ENCODE measurements at regions of chr12 and their contacts with region 1.

Region 1: DNA sequence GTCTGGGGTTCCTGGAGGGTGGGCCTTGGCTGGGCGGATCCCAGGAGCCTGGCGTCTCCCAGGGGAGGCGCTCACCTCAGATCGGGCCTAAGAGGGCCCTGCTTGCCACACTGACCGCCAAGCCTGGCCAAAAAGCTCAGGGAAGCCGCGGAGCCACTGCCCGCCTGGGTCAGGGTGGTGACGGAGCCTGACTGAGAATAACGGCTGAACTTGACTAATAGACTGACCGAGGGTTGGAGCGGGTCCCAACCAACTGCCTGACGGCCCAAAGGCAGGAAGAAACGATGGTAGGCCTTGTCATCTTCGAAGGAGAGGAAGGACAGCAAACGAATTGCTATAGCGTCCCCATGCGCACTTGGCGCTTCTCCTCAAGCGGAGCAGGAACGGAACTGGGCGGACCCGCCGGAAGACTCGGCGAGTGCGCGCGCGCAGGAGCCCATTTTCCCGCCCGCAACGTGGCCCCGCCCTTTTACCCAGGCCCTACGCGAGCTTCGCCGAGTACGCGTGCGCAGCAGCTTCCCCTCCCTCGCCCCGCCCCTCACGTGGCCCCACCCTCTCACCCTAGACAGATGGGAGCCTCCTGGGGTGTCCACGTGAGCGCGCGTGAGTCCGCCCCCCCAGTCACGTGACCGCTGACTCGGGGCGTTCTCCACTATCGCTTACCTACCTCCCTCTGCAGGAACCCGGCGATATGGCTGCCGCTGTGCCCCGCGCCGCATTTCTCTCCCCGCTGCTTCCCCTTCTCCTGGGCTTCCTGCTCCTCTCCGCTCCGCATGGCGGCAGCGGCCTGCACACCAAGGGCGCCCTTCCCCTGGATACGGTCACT is at the starts of genes ERP29 and TMEM116:
- DNase-seq: peak; percentile 99 to 100 (median 100)
- ATAC-seq: peak; percentile 93 to 95 (median 94)
- H3K4me3 ChIP-seq: peak within 1 kb of the TSS; percentile 78 to 100 (median 92)
- H3K27ac ChIP-seq: peak within 1 kb of the TSS; percentile 86 to 98 (median 95)
- H3K4me1 ChIP-seq: peaks cover 0 to 43% (median 25%) of the 10 kb centered on the region in 12 donors
- H3K27me3 ChIP-seq: no peaks in the 10 kb centered on the region
- CTCF ChIP-seq: peak; percentile 41 to 72 (median 56)
- POLR2A ChIP-seq: peak; percentile 76 to 86
- total RNA-seq, gene ERP29: 22.5 to 92.5 (median 55.9) TPM
- total RNA-seq, gene TMEM116: 25.7 to 63.6 (median 44.3) TPM

Region 2: DNA sequence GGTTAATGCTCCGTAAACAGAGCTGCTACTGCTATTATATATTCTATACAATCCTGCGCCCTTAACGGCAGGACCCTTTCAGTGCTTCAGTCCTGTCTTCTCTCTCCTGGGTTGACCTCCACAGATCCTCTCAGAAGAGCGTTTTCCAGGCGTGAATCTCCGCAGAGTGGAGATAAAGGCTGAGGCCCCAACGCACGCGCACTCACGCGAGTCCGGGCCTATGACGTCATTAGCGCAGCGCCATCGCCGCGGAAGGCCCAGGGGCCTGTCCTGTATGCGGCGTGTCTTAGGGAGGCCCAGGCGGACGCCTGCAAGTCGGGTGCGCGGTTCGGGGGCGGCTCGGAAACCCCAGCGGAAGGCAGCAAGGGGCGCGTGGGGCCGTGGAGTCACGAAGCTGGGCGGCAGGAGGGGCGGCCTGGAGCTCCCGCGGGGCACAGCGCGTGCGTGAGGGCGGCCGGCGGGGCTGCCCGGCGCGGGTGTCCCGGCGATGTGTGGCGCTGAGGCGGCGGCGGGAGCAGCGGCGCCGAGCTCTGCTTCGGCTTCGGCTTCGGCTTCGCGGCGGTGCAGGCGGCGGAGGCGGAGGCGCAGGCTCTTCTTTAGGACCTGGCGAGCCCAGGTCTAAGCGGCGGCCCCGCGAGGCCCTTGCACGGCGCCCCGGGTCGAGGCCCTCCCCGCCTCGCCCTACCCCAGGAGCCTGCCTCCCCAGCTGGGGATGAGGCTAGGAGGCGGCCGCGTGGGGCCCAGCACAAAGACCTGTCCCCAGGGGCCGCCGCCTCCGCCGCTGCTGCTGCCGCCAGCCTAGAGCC is 171.0 kb before region 1 on chr12 and contains the start of gene MAPKAPK5:
- intact Hi-C with region 1: loop called in 1 of 10 experiments (anchors 2 kb)
- DNase-seq: peak; percentile 93 to 97 (median 95)
- ATAC-seq: peak; percentile 94 to 99 (median 96)
- H3K4me3 ChIP-seq: peak within 1 kb of the TSS; percentile 73 to 100 (median 94)
- H3K27ac ChIP-seq: peak within 1 kb of the TSS; percentile 91 to 99 (median 96)
- H3K4me1 ChIP-seq: peaks cover 10 to 50% (median 36%) of the 10 kb centered on the region in 12 donors
- H3K27me3 ChIP-seq: no peaks in the 10 kb centered on the region
- CTCF ChIP-seq: no peak
- POLR2A ChIP-seq: peak in 1 of 2 donors; percentile 56
- total RNA-seq, gene MAPKAPK5: 20.2 to 28.7 (median 25.2) TPM

Region 3: GRCh38 chr12:111942557-111942956 is 70.4 kb before region 1 on chr12:
- intact Hi-C with region 1: loop called in 6 of 10 experiments (anchors 2 to 5 kb)
- DNase-seq: no peak
- ATAC-seq: no peak
- H3K4me3 ChIP-seq: no peak overlapping the region
- H3K27ac ChIP-seq: no peak overlapping the region
- H3K4me1 ChIP-seq: peaks cover 0 to 19% (median 1%) of the 10 kb centered on the region in 12 donors
- H3K27me3 ChIP-seq: no peaks in the 10 kb centered on the region
- CTCF ChIP-seq: no peak
- POLR2A ChIP-seq: no peak

Region 4: DNA sequence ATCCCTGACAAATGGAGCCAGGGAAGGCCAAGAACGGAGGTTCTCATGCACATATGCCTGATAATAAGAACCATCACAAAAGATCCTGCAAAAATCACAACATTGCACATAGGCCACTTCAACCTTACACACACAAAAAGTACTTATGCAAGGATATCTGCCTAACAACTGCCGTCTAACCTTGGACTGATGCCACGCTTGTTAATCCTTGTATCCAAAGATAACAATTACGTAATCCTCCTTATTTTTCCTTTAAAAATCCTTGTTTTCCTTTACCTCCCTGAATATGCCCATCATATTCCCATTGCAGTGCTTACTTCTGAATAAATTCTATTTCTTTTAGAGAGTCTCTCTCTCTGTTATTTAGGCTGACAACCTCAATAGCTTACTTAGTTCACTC is 59.5 kb before region 1 on chr12:
- intact Hi-C with region 1: loop called in 5 of 10 experiments (anchors 5 kb)
- DNase-seq: peak in 1 of 5 donors; percentile 14
- ATAC-seq: peak in 1 of 4 donors; percentile 24
- H3K4me3 ChIP-seq: no peak overlapping the region
- H3K27ac ChIP-seq: no peak overlapping the region
- H3K4me1 ChIP-seq: peaks cover 0 to 6% (median 0%) of the 10 kb centered on the region in 12 donors
- H3K27me3 ChIP-seq: no peaks in the 10 kb centered on the region
- CTCF ChIP-seq: no peak
- POLR2A ChIP-seq: no peak

Region 5: GRCh38 chr12:111991946-111992345 is 21.0 kb before region 1 on chr12:
- intact Hi-C with region 1: no loop called
- DNase-seq: no peak
- ATAC-seq: no peak
- H3K4me3 ChIP-seq: no peak overlapping the region
- H3K27ac ChIP-seq: peak overlapping the region in 1 of 12 donors; percentile 73
- H3K4me1 ChIP-seq: peaks cover 0 to 41% (median 7%) of the 10 kb centered on the region in 12 donors
- H3K27me3 ChIP-seq: no peaks in the 10 kb centered on the region
- CTCF ChIP-seq: no peak
- POLR2A ChIP-seq: no peak

Region 6: DNA sequence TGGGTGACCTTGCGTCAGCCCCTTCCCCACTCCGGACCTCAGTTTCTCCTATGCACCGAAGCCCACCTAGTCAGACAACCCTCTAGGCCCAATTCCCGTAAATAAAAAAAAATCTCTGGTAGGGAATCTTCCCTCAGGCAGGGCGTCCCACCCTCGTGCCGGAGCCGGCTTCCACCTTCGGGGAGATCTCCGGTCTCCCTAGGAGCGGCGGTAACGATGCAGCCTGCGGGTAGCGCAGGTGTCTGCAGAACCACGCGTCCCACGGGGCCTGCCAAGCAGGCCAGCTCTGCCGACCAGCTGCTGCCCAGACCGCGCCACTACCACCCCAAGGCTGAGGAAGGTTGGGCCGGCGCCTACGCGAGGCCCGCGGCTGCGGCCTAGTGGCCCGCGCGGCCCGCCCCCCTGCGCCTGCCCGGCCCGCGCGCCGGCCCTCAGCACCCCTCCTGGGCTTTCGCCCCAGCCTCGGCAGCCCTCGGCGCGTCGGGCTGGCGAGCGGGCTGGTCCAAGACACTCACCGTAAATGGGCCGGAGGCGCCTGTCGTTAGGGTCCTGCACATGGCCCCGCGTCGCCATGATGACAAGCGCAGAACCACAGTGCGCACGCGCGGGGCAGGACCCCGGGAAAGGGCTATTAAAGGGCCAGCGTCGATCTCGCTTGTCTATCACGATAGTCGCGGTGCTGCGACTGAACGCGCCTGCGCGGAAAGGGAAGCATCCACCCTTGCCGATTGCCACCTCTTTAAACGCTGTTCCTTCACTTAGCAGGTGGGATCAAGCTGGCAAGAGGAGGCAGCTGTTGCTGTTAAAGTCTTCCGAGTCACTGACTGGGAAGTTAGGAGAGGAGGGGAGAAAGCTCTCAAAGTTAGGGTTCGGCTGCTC is 95.5 kb after region 1 on chr12 and contains the start of gene NAA25:
- intact Hi-C with region 1: no loop called
- DNase-seq: peak; percentile 90 to 96 (median 93)
- ATAC-seq: peak; percentile 91 to 96 (median 93)
- H3K4me3 ChIP-seq: peak within 1 kb of the TSS; percentile 48 to 91 (median 78)
- H3K27ac ChIP-seq: peak within 1 kb of the TSS; percentile 84 to 99 (median 94)
- H3K4me1 ChIP-seq: peaks cover 0 to 44% (median 27%) of the 10 kb centered on the region in 12 donors
- H3K27me3 ChIP-seq: no peaks in the 10 kb centered on the region
- CTCF ChIP-seq: no peak
- POLR2A ChIP-seq: peak in 1 of 2 donors; percentile 27
- total RNA-seq, gene NAA25: 9.1 to 25.9 (median 18.5) TPM

Region 7: GRCh38 chr12:112125250-112125999 is 112.4 kb after region 1 on chr12 and contains the start of gene TRAFD1:
- intact Hi-C with region 1: loop called in 1 of 10 experiments (anchors 10 kb)
- DNase-seq: peak; percentile 98 to 100 (median 99)
- ATAC-seq: peak; percentile 97 to 99 (median 98)
- H3K4me3 ChIP-seq: peak within 1 kb of the TSS; percentile 63 to 96 (median 81)
- H3K27ac ChIP-seq: peak within 1 kb of the TSS; percentile 75 to 95 (median 90)
- H3K4me1 ChIP-seq: peaks cover 7 to 74% (median 57%) of the 10 kb centered on the region in 12 donors
- H3K27me3 ChIP-seq: no peaks in the 10 kb centered on the region
- CTCF ChIP-seq: no peak
- POLR2A ChIP-seq: peak; percentile 98 to 99
- total RNA-seq, gene TRAFD1: 17.0 to 84.7 (median 26.4) TPM